ENCODE measurements at regions of chr11 and their contacts with region 1.

Region 1: GRCh38 chr11:47426061-47426956 is at the start of gene PSMC3:
- DNase-seq: peak; percentile 99
- H3K4me3 Mint-ChIP-seq: peak within 1 kb of the TSS; percentile 98
- H3K27ac Mint-ChIP-seq: peak within 1 kb of the TSS; percentile 98
- H3K4me1 Mint-ChIP-seq: peaks cover 26% of the 10 kb centered on the region
- H3K27me3 Mint-ChIP-seq: no peaks in the 10 kb centered on the region
- total RNA-seq, gene PSMC3: 127 to 129 TPM

Region 2: GRCh38 chr11:47394322-47395222 is 31.7 kb before region 1 on chr11:
- CTCF ChIA-PET with region 1: no interaction called
- intact Hi-C with region 1: loop called (anchors 1 kb)
- DNase-seq: peak; percentile 75
- H3K4me3 Mint-ChIP-seq: peak overlapping the region; percentile 56
- H3K27ac Mint-ChIP-seq: peak overlapping the region; percentile 88
- H3K4me1 Mint-ChIP-seq: peaks cover 37% of the 10 kb centered on the region
- H3K27me3 Mint-ChIP-seq: no peaks in the 10 kb centered on the region

Region 3: GRCh38 chr11:47578524-47579460 is 152.5 kb after region 1 on chr11 and contains the starts of genes KBTBD4 and NDUFS3:
- CTCF ChIA-PET with region 1: no interaction called
- intact Hi-C with region 1: loop called (anchors 1 kb)
- DNase-seq: peak; percentile 90
- H3K4me3 Mint-ChIP-seq: peak within 1 kb of the TSS; percentile 97
- H3K27ac Mint-ChIP-seq: peak within 1 kb of the TSS; percentile 97
- H3K4me1 Mint-ChIP-seq: peaks cover 44% of the 10 kb centered on the region
- H3K27me3 Mint-ChIP-seq: no peaks in the 10 kb centered on the region
- total RNA-seq, gene KBTBD4: 13.8 to 15.4 TPM
- total RNA-seq, gene NDUFS3: 123 to 124 TPM

Region 4: GRCh38 chr11:47642099-47642855 is 216.0 kb after region 1 on chr11 and contains the start of gene MTCH2:
- CTCF ChIA-PET with region 1: no interaction called
- intact Hi-C with region 1: loop called (anchors 1 kb)
- DNase-seq: peak; percentile 97
- H3K4me3 Mint-ChIP-seq: peak within 1 kb of the TSS; percentile 91
- H3K27ac Mint-ChIP-seq: peak within 1 kb of the TSS; percentile 81
- H3K4me1 Mint-ChIP-seq: peaks cover 19% of the 10 kb centered on the region
- H3K27me3 Mint-ChIP-seq: no peaks in the 10 kb centered on the region
- total RNA-seq, gene MTCH2: 93.7 to 95.1 TPM

Region 5: GRCh38 chr11:47715082-47715669 is 288.9 kb after region 1 on chr11 and contains the start of gene AGBL2:
- CTCF ChIA-PET with region 1: no interaction called
- intact Hi-C with region 1: loop called (anchors 1 kb)
- DNase-seq: peak; percentile 87
- H3K4me3 Mint-ChIP-seq: peak within 1 kb of the TSS; percentile 91
- H3K27ac Mint-ChIP-seq: peak within 1 kb of the TSS; percentile 94
- H3K4me1 Mint-ChIP-seq: peaks cover 16% of the 10 kb centered on the region
- H3K27me3 Mint-ChIP-seq: no peaks in the 10 kb centered on the region
- total RNA-seq, gene AGBL2: 1.3 to 2.2 TPM

Region 6: DNA sequence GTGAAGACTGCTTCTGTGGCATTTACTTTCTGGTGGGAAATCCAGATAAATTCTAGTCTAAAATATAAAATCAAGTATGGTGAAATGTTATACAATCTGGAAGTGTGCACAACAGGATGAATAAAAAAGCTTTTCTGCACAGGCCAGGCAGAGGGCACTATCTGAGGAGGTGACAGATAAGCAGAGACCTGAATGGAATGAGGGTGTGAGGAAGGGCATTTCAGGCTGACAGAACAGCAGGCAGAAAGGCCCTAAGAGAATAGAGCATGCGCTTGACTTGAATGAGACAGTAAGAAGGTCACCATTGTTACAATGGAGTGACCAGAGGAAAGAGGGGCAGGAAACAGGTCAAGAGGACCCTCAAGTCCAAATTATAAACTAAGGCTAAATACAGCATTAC is 374.4 kb after region 1 on chr11:
- CTCF ChIA-PET with region 1: no interaction called
- intact Hi-C with region 1: no loop called
- DNase-seq: no peak
- H3K4me3 Mint-ChIP-seq: no peak overlapping the region
- H3K27ac Mint-ChIP-seq: no peak overlapping the region
- H3K4me1 Mint-ChIP-seq: peaks cover 12% of the 10 kb centered on the region
- H3K27me3 Mint-ChIP-seq: no peaks in the 10 kb centered on the region